WTC11 (cell line): ENCODE measurements at regions of chr19 and their contacts with region 1.

Region 1: DNA sequence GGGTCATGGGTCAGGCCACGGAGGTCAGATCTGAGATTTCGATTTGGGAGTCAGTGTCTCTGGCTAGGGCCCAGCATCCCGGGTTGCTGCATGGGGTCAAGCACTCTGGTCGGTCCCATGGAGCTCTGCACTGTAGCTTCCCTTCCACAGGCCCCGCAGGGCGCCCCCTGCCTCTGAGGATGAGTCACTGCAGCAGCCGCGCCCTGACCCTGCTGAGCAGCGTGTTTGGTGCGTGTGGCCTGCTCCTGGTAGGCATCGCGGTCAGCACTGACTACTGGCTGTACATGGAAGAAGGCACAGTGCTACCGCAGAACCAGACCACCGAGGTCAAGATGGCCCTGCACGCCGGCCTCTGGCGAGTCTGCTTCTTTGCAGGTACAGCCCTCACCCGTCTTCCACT is 3.6 kb downstream of the CACNG7 start:
- DNase-seq: peak; percentile 88
- ATAC-seq: peak; percentile 49
- H3K4me3 Mint-ChIP-seq: no peak overlapping the region
- H3K27ac Mint-ChIP-seq: no peak overlapping the region; the same call in 1 of the 2 replicates
- H3K4me1 Mint-ChIP-seq: peaks cover 17% of the 10 kb centered on the region
- H3K27me3 Mint-ChIP-seq: peaks cover 34% of the 10 kb centered on the region
- CTCF ChIP-seq: peak; percentile 92

Region 2: DNA sequence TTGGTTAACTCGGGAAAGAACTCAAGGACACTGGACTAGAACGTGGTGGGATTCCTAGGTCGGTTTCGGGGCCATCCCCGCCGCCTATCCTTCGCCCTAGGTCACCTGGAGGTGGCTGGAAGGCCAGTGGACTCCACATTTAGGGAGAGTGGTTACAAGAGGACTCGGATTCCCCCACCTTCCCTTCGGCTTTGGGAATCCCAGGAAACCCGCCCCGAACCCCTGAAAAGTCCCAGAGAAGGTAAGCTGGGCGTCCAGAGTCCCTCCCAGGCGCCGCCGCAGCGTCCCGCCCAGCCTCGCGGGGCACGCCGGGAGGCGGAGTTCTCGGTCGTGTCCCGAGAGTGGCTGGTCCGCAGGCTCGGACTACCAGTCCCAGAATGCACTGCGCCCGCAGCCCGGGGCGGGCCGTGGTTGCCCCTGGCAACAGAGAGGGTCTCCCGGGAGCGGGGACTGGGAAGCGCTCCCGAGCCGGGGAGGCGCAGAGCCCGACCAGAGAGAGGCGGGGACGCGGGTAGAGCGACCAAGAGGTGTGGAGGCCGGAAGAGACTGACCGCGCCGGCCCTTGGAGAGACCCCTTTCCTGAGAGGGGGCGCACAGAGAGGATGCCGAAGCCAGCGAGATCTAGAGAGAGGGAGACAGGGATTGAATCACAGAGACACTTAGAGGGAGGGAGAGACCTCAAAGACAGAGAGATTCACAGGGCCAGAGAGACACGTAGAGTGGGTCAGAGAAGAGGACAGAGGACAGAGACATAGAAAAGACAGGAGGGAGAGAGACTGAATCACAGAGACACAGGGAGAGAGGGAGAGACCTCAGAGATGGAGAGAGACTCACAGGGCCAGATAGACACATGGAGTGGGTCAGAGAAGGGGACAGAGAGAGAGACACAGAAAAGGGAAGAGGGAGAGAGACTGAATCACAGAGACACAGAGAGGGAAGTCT is 33.2 kb before region 1 on chr19:
- CTCF ChIA-PET with region 1: interaction called, 23 read pairs
- POLR2A ChIA-PET with region 1: interaction called, 4 read pairs
- DNase-seq: peak; percentile 100
- ATAC-seq: peak; percentile 84
- H3K4me3 Mint-ChIP-seq: no peak overlapping the region
- H3K27ac Mint-ChIP-seq: peak overlapping the region; percentile 81
- H3K4me1 Mint-ChIP-seq: peaks cover 27% of the 10 kb centered on the region
- H3K27me3 Mint-ChIP-seq: peaks cover 11% of the 10 kb centered on the region
- CTCF ChIP-seq: no peak

Region 3: DNA sequence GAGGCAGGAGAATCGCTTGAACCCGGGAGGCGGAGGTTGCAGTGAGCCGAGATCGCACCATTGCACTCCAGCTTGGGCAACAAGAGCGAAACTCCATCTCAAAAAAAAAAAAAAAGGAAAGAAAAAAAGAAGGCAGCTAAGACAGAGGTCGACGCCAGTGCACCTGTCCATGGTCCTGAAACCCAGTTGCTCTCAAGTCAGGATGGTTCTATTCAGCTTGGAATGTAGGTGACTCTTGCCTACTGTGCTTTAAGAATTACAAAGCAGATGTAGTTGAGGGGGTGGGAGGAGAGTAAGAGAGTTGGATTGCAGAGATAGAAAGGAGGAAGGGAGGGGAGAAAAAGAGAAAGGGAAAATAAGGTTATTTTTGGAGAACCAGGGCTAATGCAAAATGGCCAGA is 15.1 kb after region 1 on chr19:
- CTCF ChIA-PET with region 1: interaction called, 42 read pairs
- POLR2A ChIA-PET with region 1: interaction called, 3 read pairs
- DNase-seq: peak; percentile 88
- ATAC-seq: peak; percentile 94
- H3K4me3 Mint-ChIP-seq: no peak overlapping the region
- H3K27ac Mint-ChIP-seq: peak overlapping the region; percentile 7
- H3K4me1 Mint-ChIP-seq: peaks cover 6% of the 10 kb centered on the region
- H3K27me3 Mint-ChIP-seq: no peaks in the 10 kb centered on the region
- CTCF ChIP-seq: no peak

Region 4: DNA sequence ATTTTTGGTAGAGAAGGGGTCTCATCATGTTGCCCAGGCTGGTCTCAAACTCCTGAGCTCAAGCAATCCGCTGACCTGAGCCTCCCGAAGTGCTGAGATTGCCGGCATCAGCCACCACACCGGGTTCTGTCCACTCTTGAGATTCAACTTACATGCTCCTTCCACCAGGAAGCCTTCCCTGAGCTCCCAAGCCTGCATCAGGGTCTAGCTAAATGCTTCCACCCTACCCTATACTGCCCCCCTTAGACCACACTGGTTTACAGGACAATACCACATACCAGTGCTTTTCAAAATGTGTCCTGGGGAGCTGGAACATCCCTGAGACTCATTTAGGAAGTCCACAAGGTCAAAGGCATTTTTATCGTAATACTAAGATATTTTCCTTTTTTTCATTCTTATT is 35.0 kb after region 1 on chr19:
- CTCF ChIA-PET with region 1: interaction called, 102 read pairs
- POLR2A ChIA-PET with region 1: interaction called, 8 read pairs
- DNase-seq: no peak
- ATAC-seq: peak; percentile 83
- H3K4me3 Mint-ChIP-seq: no peak overlapping the region
- H3K27ac Mint-ChIP-seq: no peak overlapping the region; the same call in 1 of the 2 replicates
- H3K4me1 Mint-ChIP-seq: peaks cover 42% of the 10 kb centered on the region
- H3K27me3 Mint-ChIP-seq: no peaks in the 10 kb centered on the region
- CTCF ChIP-seq: no peak

Region 5: GRCh38 chr19:53982611-53983010 is 70.0 kb after region 1 on chr19:
- CTCF ChIA-PET with region 1: interaction called, 26 read pairs
- POLR2A ChIA-PET with region 1: interaction called, 5 read pairs
- DNase-seq: peak; percentile 62
- ATAC-seq: no peak
- H3K4me3 Mint-ChIP-seq: no peak overlapping the region
- H3K27ac Mint-ChIP-seq: no peak overlapping the region
- H3K4me1 Mint-ChIP-seq: peaks cover 11% of the 10 kb centered on the region
- H3K27me3 Mint-ChIP-seq: peaks cover 4% of the 10 kb centered on the region; the same call in 1 of the 2 replicates
- CTCF ChIP-seq: no peak

Region 6: GRCh38 chr19:54137086-54137921 is 224.7 kb after region 1 on chr19 and contains the start of gene CNOT3:
- CTCF ChIA-PET with region 1: interaction called, 11 read pairs
- POLR2A ChIA-PET with region 1: no interaction called
- DNase-seq: peak; percentile 100
- ATAC-seq: peak; percentile 89
- H3K4me3 Mint-ChIP-seq: peak within 1 kb of the TSS; percentile 92
- H3K27ac Mint-ChIP-seq: peak within 1 kb of the TSS; percentile 98
- H3K4me1 Mint-ChIP-seq: peaks cover 35% of the 10 kb centered on the region
- H3K27me3 Mint-ChIP-seq: no peaks in the 10 kb centered on the region
- CTCF ChIP-seq: no peak
- total RNA-seq, gene CNOT3: 90.7 to 96.8 TPM (median 93.3 TPM) in 3 replicates